Heart right ventricle (tissue), 16 donors: ENCODE measurements at regions of chr19 and their contacts with region 1.

Region 1: GRCh38 chr19:16041299-16041990 is 34.9 kb upstream of the TPM4 start:
- DNase-seq: peak; percentile 79 to 84
- ATAC-seq: peak; percentile 87 to 96 (median 94)
- H3K4me3 ChIP-seq: peak overlapping the region in 6 of 10 donors; percentile 7 to 32 (median 24)
- H3K27ac ChIP-seq: no peak overlapping the region
- H3K4me1 ChIP-seq: peaks cover 0 to 17% (median 10%) of the 10 kb centered on the region in 9 donors
- H3K27me3 ChIP-seq: peaks cover 0 to 9% (median 0%) of the 10 kb centered on the region in 7 donors
- CTCF ChIP-seq: peak in 8 of 9 donors; percentile 95 to 99 (median 96)

Region 2: GRCh38 chr19:16106121-16106520 is 64.7 kb after region 1 on chr19:
- intact Hi-C with region 1: loop called in 7 of 10 experiments (anchors 2 to 5 kb)
- DNase-seq: no peak
- ATAC-seq: no peak
- H3K4me3 ChIP-seq: no peak overlapping the region
- H3K27ac ChIP-seq: no peak overlapping the region
- H3K4me1 ChIP-seq: peaks cover 0 to 7% (median 4%) of the 10 kb centered on the region in 9 donors
- H3K27me3 ChIP-seq: no peaks in the 10 kb centered on the region
- CTCF ChIP-seq: no peak

Region 3: DNA sequence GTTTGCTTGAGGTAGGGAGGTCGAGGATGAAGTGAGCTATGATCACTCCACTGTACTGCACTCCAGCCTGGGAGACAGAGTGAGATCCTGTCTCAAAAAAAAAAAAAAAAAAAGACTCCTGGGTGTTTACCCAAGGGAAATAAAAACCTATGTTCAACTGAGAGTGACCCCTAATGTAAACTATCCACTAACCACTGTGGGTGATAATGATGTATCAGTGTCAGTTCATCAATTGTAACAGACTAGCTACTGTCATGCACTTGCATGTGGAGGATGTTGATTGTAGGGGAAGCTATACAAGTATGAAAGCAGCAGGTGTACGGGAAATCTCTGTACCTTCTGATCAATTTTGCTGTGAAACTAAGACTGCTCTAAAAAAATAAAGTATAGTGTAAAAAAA is 134.5 kb after region 1 on chr19:
- intact Hi-C with region 1: loop called in 3 of 10 experiments (anchors 5 kb)
- DNase-seq: no peak
- ATAC-seq: no peak
- H3K4me3 ChIP-seq: no peak overlapping the region
- H3K27ac ChIP-seq: no peak overlapping the region
- H3K4me1 ChIP-seq: no peaks in the 10 kb centered on the region
- H3K27me3 ChIP-seq: peaks cover 0 to 32% (median 0%) of the 10 kb centered on the region in 7 donors
- CTCF ChIP-seq: no peak

Region 4: DNA sequence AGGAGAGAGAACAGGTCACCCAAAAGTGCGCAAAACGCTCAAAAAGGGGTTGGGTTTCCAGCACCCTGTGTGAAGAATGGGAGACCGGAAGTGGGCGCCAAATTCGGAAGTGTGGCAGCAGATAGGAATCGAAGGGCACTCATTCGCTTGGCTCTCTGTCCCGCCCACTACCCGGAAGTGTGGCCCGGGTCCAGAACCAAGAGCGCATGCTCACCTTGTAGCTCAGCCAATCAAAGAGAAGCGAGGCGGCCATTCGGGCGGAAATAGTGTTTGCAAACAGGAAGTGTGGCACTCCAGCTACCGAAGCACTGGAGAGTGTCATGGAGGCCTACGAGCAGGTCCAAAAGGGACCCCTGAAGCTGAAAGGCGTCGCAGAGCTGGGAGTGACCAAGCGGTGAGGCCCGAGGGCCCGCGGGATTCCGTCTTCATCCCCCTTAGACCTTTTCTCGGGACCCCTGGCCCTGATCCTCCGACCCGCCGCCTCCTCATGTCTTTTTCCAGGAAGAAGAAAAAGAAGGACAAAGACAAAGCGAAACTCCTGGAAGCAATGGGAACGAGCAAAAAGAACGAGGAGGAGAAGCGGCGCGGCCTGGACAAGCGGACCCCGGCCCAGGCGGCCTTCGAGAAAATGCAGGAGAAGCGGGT is 143.8 kb after region 1 on chr19 and contains the start of gene FAM32A:
- intact Hi-C with region 1: loop called in 9 of 10 experiments (anchors 1 to 5 kb)
- DNase-seq: peak; percentile 99
- ATAC-seq: peak; percentile 96 to 99 (median 98)
- H3K4me3 ChIP-seq: peak within 1 kb of the TSS; percentile 74 to 96 (median 90)
- H3K27ac ChIP-seq: peak within 1 kb of the TSS; percentile 21 to 93 (median 87)
- H3K4me1 ChIP-seq: peaks cover 0 to 40% (median 21%) of the 10 kb centered on the region in 9 donors
- H3K27me3 ChIP-seq: peaks cover 0 to 20% (median 0%) of the 10 kb centered on the region in 7 donors
- CTCF ChIP-seq: peak in 7 of 9 donors; percentile 10 to 50 (median 34)
- total RNA-seq, gene FAM32A: 27.0 to 44.5 (median 32.5) TPM